ENCODE measurements at regions of chr20 and their contacts with region 1.

Region 1: GRCh38 chr20:25005220-25005619 is 12.7 kb upstream of the APMAP start:
- DNase-seq: peak; percentile 36

Region 2: DNA sequence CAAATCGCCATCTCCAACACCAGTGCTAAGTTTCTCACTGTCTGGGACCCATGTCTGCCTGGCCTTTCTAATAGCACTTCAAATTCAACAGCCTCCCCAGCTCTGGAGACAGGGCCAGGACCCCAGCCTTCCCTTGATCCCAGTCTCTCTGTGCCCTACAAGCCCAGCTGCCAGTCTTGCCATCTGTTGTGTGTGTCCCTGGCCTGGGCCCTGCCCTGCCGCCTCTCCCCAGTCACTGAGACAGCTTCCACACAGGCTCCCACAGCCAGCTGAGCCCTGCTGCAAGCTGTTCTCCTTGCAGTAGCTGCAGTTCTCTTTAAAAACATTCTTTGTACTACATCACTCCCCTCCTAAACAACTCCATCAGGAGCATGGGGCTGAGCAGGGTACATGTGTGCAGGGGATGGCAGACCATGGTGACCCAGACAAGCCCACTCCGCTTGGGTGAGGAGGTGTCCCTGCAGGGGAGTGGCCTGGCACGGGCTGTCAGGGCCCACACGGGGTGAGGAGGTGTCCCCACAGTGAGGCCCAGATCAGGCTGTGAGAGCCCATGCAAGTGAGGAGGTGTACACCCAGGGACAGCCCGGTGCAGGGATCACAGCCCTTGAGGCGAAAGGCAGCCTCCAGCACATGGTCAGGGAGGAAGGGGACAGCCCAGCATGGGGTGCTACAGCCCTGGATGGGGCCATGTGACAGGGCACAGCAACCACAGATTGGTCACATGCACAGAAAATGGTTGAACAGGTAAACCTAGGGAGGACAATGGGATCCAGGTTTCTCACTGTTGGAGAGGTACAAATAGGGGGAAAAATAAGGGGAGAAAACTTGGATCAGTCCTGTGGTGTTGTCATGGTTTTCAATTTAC is 39.9 kb before region 1 on chr20:
- intact Hi-C with region 1: no loop called
- DNase-seq: peak; percentile 68

Region 3: DNA sequence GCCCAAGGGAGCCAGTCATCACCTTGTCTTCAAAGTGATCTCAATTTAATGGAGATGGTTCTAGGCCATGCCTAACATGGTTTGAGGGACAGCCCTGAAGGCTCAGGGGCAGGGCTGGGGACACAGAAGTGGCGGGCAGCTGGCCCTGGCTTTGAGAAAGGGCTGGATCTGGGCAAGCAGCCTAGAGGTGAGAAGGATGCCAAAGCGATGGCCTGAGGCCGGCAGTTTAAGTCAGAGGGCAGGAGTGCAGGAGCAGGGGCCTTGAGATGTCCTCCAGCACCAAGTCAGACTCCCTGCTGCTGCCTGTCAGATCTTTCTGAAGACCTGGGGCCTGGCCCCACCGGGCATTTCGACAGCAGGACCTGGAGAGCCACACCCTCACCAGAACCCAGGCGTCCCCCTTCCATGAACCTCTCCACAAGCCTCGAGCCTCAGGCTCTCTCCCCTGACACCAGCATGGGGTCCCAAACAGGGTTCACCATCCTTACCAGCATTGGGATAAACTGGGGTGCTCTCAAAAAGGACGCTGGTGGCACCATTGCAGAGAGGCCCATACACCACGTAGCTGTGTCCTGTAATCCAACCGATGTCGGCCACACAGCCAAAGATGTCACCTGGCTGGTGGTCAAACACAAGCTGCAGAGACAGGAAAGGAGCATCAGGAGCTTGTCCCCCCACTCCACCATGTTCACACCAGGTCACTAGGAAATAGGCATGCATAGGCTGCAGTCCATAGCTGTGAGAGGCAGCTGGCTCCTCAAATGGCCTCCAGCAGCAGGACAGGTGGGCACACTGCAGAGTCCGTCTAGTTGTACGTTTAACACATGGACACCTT is 15.9 kb after region 1 on chr20:
- intact Hi-C with region 1: loop called (anchors 2 kb)
- DNase-seq: peak; percentile 76

Region 4: DNA sequence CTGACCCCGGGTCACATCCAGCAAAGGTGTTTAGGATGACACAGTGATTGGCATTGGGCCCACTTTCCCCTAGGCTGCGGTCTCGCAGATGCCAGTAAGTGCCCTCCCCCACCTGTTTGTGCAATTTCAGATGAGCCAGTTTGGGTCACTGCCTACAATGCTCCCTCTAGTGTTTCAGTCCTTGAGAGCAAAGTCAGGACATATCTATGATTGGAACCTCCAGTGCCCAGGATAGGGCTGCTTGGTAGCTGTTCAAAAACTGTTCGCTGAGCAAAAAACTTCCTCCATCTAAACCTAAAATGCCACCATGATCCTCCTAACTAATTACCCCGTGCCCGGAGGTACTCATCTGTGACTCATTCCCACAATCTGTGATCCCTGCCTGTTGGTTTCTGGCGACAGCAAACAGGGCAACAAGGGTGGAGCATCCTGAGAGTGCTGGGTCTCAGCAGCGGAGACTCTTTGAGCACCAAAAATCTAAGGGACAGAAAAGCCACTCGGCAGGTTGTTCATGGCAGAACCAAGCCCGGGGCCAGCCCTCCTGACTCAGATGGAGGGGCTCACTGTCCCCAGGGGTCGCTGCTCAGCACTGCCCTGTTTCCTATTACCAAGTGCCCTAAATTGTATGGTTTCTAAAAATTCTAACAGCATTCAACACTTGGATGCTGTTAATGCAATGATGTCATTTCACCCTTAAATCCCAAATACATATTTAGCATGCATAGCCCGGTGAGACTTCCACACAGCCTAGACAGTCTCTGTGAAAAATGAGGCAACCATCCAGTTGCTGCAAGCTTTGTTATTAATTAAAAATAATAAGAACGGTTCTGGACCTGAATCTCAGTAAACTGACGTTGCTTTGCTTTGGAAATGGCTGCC is 71.8 kb after region 1 on chr20:
- intact Hi-C with region 1: no loop called
- DNase-seq: peak; percentile 27